PC-9 (cell line): ENCODE measurements at regions of chr6 and their contacts with region 1.

Region 1: GRCh38 chr6:149235130-149235561 is 82.4 kb upstream of the TAB2 start:
- DNase-seq: peak; percentile 48 to 75
- H3K4me3 ChIP-seq: no peak overlapping the region
- H3K27ac ChIP-seq: peak overlapping the region; percentile 87
- H3K4me1 ChIP-seq: peaks cover 45% of the 10 kb centered on the region
- H3K27me3 ChIP-seq: no peaks in the 10 kb centered on the region
- CTCF ChIP-seq: no peak

Region 2: DNA sequence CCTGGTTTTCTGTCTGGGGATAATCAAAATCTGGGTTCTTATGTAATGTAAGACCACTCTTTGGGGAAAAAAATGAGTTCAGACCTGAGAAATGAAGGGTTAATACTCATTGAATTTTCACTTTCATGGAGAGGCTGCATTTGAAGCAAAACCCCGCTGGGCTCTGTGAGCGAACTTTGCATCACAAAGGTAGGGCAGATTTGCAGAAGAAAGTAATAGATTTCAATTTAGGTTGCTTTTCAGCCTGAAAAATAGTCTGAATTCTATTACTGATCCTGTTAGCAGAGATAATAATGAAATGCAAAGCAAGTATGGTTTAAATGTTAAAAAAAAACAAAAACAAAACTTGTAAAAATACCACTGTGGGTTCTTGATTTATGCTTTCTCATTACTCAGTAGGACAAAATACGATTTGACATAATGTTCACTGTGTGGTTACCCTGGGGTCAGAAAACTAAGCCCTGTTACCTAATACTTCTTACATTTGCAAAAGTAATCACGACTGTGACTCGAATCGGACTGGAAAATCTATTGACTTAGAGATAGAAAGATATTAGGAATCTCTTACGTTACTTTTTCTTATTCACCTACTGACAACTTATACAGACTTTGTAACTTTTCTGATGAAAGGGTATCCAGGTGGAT is 416.1 kb before region 1 on chr6:
- CTCF ChIA-PET with region 1: no interaction called
- POLR2A ChIA-PET with region 1: no interaction called
- intact Hi-C with region 1: no loop called
- DNase-seq: peak in 1 of 2 experiments; percentile 50
- H3K4me3 ChIP-seq: no peak overlapping the region
- H3K27ac ChIP-seq: no peak overlapping the region
- H3K4me1 ChIP-seq: no peaks in the 10 kb centered on the region
- H3K27me3 ChIP-seq: no peaks in the 10 kb centered on the region
- CTCF ChIP-seq: no peak

Region 3: GRCh38 chr6:149170564-149171452 is 64.3 kb before region 1 on chr6:
- CTCF ChIA-PET with region 1: no interaction called
- POLR2A ChIA-PET with region 1: no interaction called
- intact Hi-C with region 1: loop called (anchors 2 kb)
- DNase-seq: no peak
- H3K4me3 ChIP-seq: no peak overlapping the region
- H3K27ac ChIP-seq: peak overlapping the region; percentile 78
- H3K4me1 ChIP-seq: peaks cover 34% of the 10 kb centered on the region
- H3K27me3 ChIP-seq: no peaks in the 10 kb centered on the region
- CTCF ChIP-seq: no peak

Region 4: GRCh38 chr6:149246691-149247384 is 11.7 kb after region 1 on chr6:
- CTCF ChIA-PET with region 1: no interaction called
- POLR2A ChIA-PET with region 1: no interaction called
- intact Hi-C with region 1: no loop called
- DNase-seq: no peak
- H3K4me3 ChIP-seq: no peak overlapping the region
- H3K27ac ChIP-seq: no peak overlapping the region
- H3K4me1 ChIP-seq: 0 out of 2 replicates have a peak, but pooled peaks cover 15% of the 10 kb centered on the region
- H3K27me3 ChIP-seq: no peaks in the 10 kb centered on the region
- CTCF ChIP-seq: no peak

Region 5: DNA sequence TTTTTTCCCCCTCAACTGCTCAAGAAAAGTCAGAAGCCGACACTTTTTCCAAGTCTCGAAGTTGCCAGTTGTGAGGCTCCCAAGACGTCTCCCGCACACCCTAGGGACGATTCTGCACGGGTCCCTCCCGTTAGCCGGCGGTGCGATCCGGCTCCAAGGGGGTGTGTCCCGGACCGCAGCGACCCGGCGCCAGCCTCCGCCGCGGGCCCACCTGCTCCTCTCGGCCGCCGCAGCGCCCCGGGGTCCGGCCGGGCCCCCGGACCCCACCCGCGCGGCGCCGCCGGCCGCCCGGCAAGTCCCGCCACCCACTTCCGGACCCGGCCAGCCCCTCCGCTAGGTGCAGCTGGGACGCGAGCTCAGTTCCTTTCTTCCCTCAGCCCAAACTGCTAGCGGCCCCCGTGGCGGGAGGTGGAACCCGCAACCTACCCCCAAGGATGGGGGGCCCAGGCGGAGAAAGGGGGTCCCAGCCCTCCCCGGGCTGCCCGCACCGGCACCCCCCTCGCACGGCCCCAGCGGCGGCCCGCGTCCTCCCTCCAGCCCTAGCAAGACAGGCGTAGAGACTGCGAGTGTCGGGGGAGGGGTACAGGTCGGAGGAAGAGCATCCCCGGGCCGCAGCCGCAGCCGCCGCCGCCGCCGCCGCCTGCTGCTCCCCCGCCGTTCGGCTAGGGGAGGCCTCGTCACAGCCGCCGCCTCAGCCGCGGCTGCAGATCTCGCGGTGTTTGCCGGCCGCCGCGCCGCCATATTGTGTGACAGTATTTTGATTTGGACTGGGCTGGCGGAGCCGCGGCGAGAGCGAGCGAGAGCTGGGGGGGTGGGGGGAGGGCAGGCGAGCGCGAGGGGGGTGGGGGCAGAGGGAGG is 81.9 kb after region 1 on chr6:
- CTCF ChIA-PET with region 1: no interaction called
- POLR2A ChIA-PET with region 1: no interaction called
- intact Hi-C with region 1: loop called (anchors 5 kb)
- DNase-seq: peak; percentile 74 to 78
- H3K4me3 ChIP-seq: peak overlapping the region; percentile 98
- H3K27ac ChIP-seq: peak overlapping the region; percentile 75
- H3K4me1 ChIP-seq: peaks cover 34% of the 10 kb centered on the region
- H3K27me3 ChIP-seq: no peaks in the 10 kb centered on the region
- CTCF ChIP-seq: no peak

Region 6: GRCh38 chr6:149334682-149335160 is 99.6 kb after region 1 on chr6:
- CTCF ChIA-PET with region 1: no interaction called
- POLR2A ChIA-PET with region 1: no interaction called
- intact Hi-C with region 1: loop called (anchors 1 kb)
- DNase-seq: peak; percentile 46 to 68
- H3K4me3 ChIP-seq: no peak overlapping the region
- H3K27ac ChIP-seq: peak overlapping the region; percentile 62
- H3K4me1 ChIP-seq: peaks cover 63% of the 10 kb centered on the region
- H3K27me3 ChIP-seq: no peaks in the 10 kb centered on the region
- CTCF ChIP-seq: no peak